ENCODE measurements at regions of chr13 and their contacts with region 1.

Region 1: GRCh38 chr13:97855570-97856303 is 97.7 kb upstream of the IPO5 start:
- DNase-seq: peak; percentile 57
- ATAC-seq: peak; percentile 89

Region 2: DNA sequence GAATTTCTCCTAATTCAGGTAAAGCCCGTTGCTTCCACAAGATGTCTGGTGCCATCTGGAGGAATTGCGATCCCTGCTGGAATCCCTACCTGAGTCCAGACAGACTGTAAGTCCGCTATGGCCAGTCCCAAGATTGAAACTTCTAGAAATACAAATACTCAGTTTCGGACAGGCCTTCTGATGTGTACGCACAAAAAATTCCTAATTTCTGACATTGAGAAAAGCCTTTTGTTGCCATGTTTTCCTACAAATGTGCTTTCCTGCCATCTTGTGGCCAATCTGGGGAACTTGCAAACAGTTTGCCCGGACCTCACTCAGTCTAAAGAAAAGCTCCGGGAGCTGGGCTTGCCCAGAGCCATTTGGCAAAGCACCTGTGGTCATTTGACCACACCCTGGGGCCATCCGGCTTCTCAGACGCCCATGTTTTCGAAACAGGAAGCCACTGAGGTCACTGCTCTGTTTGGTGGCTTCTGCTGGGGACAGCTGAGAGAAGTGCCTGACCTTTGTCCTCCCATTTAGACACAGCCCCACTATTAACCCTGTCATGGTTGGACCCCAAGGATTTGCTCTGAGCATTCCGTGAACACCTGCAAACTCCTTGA is 817.3 kb after region 1 on chr13:
- intact Hi-C with region 1: loop called (anchors 10 kb)
- DNase-seq: peak; percentile 66
- ATAC-seq: peak; percentile 95